ENCODE measurements at regions of chr1 and their contacts with region 1.

Region 1: DNA sequence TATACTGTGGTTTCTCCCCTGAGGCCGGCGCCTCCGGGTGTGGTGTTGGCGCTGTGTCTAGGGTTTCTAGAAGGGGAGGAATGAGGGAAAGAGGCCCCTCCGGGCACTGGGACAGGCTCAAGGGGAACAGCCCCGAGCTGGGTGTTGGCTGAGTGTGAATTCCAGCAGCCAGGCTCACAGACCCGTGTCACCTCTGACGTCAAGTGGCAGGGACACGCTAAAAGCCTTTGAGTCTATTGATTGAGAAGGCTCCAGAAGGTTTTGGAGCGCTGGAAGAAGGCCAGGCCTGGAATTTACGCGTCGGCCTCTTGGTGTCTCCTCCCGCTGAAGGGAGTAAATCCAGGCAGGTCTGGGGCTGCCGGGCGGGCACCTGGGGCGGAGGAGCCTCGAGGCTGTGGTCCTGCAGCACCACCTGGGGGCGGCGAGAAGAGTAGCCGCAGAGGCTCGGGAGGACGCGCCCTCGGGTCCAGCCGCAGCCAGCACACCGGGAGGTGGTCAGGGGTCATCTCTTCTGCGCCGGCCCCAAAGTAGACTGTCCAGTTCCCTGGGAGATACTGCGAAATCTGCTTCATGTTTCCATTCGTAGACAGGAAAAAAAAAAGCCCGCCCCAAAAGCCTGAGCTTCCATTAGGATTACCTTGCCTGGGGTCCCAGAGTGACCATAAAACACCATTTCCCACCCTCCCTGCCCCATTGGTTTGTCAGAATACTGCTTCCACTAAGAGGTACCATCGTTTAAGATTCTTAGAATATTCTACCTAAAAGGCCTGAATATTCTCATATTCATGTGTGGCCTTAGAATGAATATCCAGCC is 61.7 kb downstream of the TLR5 start:
- DNase-seq: peak; percentile 86 to 93 (median 90)
- ATAC-seq: peak; percentile 81 to 97 (median 92)
- H3K4me3 ChIP-seq: peak overlapping the region in 10 of 12 donors; percentile 23 to 56 (median 48)
- H3K27ac ChIP-seq: peak overlapping the region; percentile 5 to 83 (median 72)
- H3K4me1 ChIP-seq: peaks cover 2 to 35% (median 22%) of the 10 kb centered on the region in 12 donors
- H3K27me3 ChIP-seq: no peaks in the 10 kb centered on the region
- CTCF ChIP-seq: peak; percentile 82 to 100 (median 96)
- POLR2A ChIP-seq: peak in 1 of 2 donors; percentile 30

Region 2: GRCh38 chr1:222171005-222171404 is 910.4 kb before region 1 on chr1:
- intact Hi-C with region 1: no loop called
- DNase-seq: no peak
- ATAC-seq: peak in 3 of 4 donors; percentile 28 to 75 (median 67)
- H3K4me3 ChIP-seq: no peak overlapping the region
- H3K27ac ChIP-seq: no peak overlapping the region
- H3K4me1 ChIP-seq: no peaks in the 10 kb centered on the region
- H3K27me3 ChIP-seq: no peaks in the 10 kb centered on the region
- CTCF ChIP-seq: peak; percentile 29 to 58 (median 41)
- POLR2A ChIP-seq: no peak

Region 3: DNA sequence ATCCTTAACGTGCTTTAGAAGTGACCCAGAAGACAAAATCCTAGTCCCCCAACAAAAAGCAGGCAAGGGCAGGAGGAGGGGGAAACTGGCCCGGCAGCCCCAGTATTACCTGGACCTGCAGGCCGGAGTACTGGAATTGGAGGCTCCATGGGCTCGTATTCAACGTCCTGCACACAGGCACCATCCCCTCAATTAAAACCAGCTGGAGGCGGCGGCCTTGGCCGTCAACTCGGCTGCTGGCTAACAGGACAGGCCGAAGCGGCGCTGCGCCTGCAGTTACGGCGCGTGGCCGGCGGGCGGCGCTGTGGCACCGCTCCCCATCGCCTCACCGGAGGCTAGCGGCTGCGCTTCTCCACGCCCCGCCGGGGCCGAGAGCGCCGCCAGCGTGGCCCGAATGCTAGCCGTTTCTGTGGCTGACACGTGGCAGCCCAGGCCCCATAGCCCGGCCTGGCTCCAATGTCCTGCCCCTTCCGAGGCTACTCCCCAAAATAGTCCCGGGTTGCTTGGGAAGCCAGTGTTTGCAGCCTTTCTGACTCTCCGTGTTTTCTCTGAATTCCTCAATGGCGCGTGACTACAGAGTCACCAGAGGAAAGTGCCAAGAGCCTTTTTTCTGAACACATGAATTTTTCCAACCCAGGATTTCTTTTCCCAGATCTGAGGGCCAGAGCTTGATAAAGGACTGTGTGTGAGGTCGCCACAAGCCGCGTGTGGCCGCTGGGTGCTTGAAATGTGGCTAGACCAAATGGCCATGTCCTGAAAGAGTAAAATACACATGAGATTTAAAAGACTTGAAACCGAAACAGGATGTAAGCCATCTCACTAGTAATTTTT is 616.0 kb before region 1 on chr1:
- intact Hi-C with region 1: loop called in 1 of 10 experiments (anchors 10 kb)
- DNase-seq: peak; percentile 88 to 94 (median 91)
- ATAC-seq: peak; percentile 95 to 100 (median 100)
- H3K4me3 ChIP-seq: peak overlapping the region; percentile 9 to 60 (median 50)
- H3K27ac ChIP-seq: peak overlapping the region; percentile 47 to 92 (median 76)
- H3K4me1 ChIP-seq: peaks cover 0 to 17% (median 7%) of the 10 kb centered on the region in 12 donors
- H3K27me3 ChIP-seq: peaks cover 0 to 2% (median 0%) of the 10 kb centered on the region in 9 donors
- CTCF ChIP-seq: peak; percentile 99 to 100 (median 100)
- POLR2A ChIP-seq: no peak

Region 4: DNA sequence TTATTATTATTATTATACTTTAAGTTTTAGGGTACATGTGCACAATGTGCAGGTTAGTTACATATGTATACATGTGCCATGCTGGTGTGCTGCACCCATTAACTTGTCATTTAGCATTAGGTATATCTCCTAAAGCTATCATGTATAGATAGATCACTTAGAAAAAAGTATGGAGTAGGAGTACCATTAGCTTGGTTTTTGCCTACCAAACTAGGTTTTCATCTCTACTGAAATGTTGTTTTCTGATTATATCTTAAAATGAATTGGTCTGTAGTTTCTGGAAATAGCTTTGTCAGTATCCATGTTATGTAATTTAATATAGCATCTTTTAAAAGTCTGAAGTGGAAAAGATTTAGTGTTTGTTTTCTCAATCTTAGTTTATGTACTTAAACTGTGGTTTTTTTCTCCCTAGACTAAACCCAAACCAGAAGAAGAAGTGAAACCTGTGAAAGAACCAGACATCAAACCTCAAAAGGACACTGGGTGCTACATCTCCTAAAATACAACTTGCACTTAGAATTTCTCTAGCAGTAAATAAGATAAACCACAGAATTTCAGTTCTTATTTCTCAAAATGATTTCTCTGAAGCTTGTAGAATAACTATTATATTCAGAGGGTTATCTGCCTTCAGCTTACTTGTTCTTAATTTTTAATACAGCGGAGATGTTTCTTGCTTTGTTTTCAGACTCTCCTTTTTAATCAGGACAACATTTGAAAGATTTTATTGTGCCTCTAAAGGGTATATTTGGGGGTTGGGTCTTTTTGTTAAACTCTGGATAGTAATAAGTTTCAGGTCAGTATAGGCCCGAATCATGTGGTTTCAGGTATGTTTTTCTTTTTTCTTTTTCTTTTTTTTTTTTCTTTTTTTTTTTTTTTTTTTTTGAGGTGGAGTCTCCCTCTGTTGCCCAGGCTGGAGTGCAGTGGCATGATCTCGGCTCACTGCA is 348.9 kb before region 1 on chr1:
- intact Hi-C with region 1: loop called in 3 of 10 experiments (anchors 5 kb)
- DNase-seq: no peak
- ATAC-seq: no peak
- H3K4me3 ChIP-seq: no peak overlapping the region
- H3K27ac ChIP-seq: no peak overlapping the region
- H3K4me1 ChIP-seq: peaks cover 0 to 8% (median 0%) of the 10 kb centered on the region in 12 donors
- H3K27me3 ChIP-seq: no peaks in the 10 kb centered on the region
- CTCF ChIP-seq: no peak
- POLR2A ChIP-seq: no peak

Region 5: GRCh38 chr1:222739465-222739864 is 341.9 kb before region 1 on chr1:
- intact Hi-C with region 1: loop called (anchors 1 to 5 kb)
- DNase-seq: no peak
- ATAC-seq: no peak
- H3K4me3 ChIP-seq: no peak overlapping the region
- H3K27ac ChIP-seq: no peak overlapping the region
- H3K4me1 ChIP-seq: no peaks in the 10 kb centered on the region
- H3K27me3 ChIP-seq: no peaks in the 10 kb centered on the region
- CTCF ChIP-seq: no peak
- POLR2A ChIP-seq: no peak

Region 6: GRCh38 chr1:222792744-222793143 is 288.6 kb before region 1 on chr1:
- intact Hi-C with region 1: loop called (anchors 1 to 5 kb)
- DNase-seq: no peak
- ATAC-seq: no peak
- H3K4me3 ChIP-seq: no peak overlapping the region
- H3K27ac ChIP-seq: no peak overlapping the region
- H3K4me1 ChIP-seq: peaks cover 0 to 4% (median 0%) of the 10 kb centered on the region in 12 donors
- H3K27me3 ChIP-seq: no peaks in the 10 kb centered on the region
- CTCF ChIP-seq: peak; percentile 9 to 74 (median 61)
- POLR2A ChIP-seq: no peak

Region 7: GRCh38 chr1:223006917-223007648 is 74.3 kb before region 1 on chr1:
- intact Hi-C with region 1: loop called in 2 of 10 experiments (anchors 2 to 5 kb)
- DNase-seq: no peak
- ATAC-seq: peak in 1 of 4 donors; percentile 45
- H3K4me3 ChIP-seq: no peak overlapping the region
- H3K27ac ChIP-seq: peak overlapping the region in 3 of 12 donors; percentile 15 to 53 (median 30)
- H3K4me1 ChIP-seq: peaks cover 0 to 30% (median 11%) of the 10 kb centered on the region in 12 donors
- H3K27me3 ChIP-seq: no peaks in the 10 kb centered on the region
- CTCF ChIP-seq: no peak
- POLR2A ChIP-seq: no peak

Region 8: GRCh38 chr1:223123011-223123610 is 41.7 kb after region 1 on chr1:
- intact Hi-C with region 1: loop called in 9 of 10 experiments (anchors 2 to 5 kb)
- DNase-seq: no peak
- ATAC-seq: no peak
- H3K4me3 ChIP-seq: peak overlapping the region in 3 of 12 donors; percentile 4 to 32 (median 23)
- H3K27ac ChIP-seq: peak overlapping the region in 2 of 12 donors; percentile 13 to 35
- H3K4me1 ChIP-seq: peaks cover 0 to 14% (median 2%) of the 10 kb centered on the region in 12 donors
- H3K27me3 ChIP-seq: no peaks in the 10 kb centered on the region
- CTCF ChIP-seq: no peak
- POLR2A ChIP-seq: no peak